Heart right ventricle (tissue), 16 donors: ENCODE measurements at regions of chr5 and their contacts with region 1.

Region 1: GRCh38 chr5:55344392-55344992 is 36.7 kb downstream of the MTREX start:
- DNase-seq: peak in 1 of 2 donors; percentile 47
- ATAC-seq: no peak
- H3K4me3 ChIP-seq: no peak overlapping the region
- H3K27ac ChIP-seq: no peak overlapping the region
- H3K4me1 ChIP-seq: no peaks in the 10 kb centered on the region
- H3K27me3 ChIP-seq: no peaks in the 10 kb centered on the region
- CTCF ChIP-seq: peak; percentile 69 to 94 (median 89)

Region 2: GRCh38 chr5:55387874-55388273 is 43.4 kb after region 1 on chr5:
- intact Hi-C with region 1: loop called in 1 of 10 experiments (anchors 5 kb)
- DNase-seq: no peak
- ATAC-seq: no peak
- H3K4me3 ChIP-seq: no peak overlapping the region
- H3K27ac ChIP-seq: no peak overlapping the region
- H3K4me1 ChIP-seq: peaks cover 0 to 15% (median 0%) of the 10 kb centered on the region in 9 donors
- H3K27me3 ChIP-seq: no peaks in the 10 kb centered on the region
- CTCF ChIP-seq: no peak

Region 3: GRCh38 chr5:55407059-55407684 is 62.7 kb after region 1 on chr5:
- intact Hi-C with region 1: loop called in 1 of 10 experiments (anchors 10 kb)
- DNase-seq: peak in 1 of 2 donors; percentile 20
- ATAC-seq: peak in 7 of 8 donors; percentile 53 to 90 (median 85)
- H3K4me3 ChIP-seq: no peak overlapping the region
- H3K27ac ChIP-seq: no peak overlapping the region
- H3K4me1 ChIP-seq: peaks cover 0 to 16% (median 7%) of the 10 kb centered on the region in 9 donors
- H3K27me3 ChIP-seq: no peaks in the 10 kb centered on the region
- CTCF ChIP-seq: peak; percentile 55 to 92 (median 80)

Region 4: GRCh38 chr5:55509796-55510522 is 165.5 kb after region 1 on chr5:
- intact Hi-C with region 1: loop called in 1 of 10 experiments (anchors 10 kb)
- DNase-seq: no peak
- ATAC-seq: peak in 6 of 8 donors; percentile 46 to 81 (median 68)
- H3K4me3 ChIP-seq: no peak overlapping the region
- H3K27ac ChIP-seq: peak overlapping the region in 6 of 10 donors; percentile 43 to 56 (median 47)
- H3K4me1 ChIP-seq: peaks cover 0 to 74% (median 69%) of the 10 kb centered on the region in 9 donors
- H3K27me3 ChIP-seq: no peaks in the 10 kb centered on the region
- CTCF ChIP-seq: no peak

Region 5: GRCh38 chr5:55691265-55692105 is 347.0 kb after region 1 on chr5:
- intact Hi-C with region 1: loop called (anchors 2 to 5 kb)
- DNase-seq: no peak
- ATAC-seq: peak; percentile 65 to 86 (median 73)
- H3K4me3 ChIP-seq: peak overlapping the region in 3 of 10 donors; percentile 11 to 19 (median 19)
- H3K27ac ChIP-seq: peak overlapping the region in 6 of 10 donors; percentile 5 to 52 (median 30)
- H3K4me1 ChIP-seq: peaks cover 6 to 34% (median 21%) of the 10 kb centered on the region in 9 donors
- H3K27me3 ChIP-seq: no peaks in the 10 kb centered on the region
- CTCF ChIP-seq: peak; percentile 42 to 83 (median 72)